ENCODE measurements at regions of chr15 and their contacts with region 1.

Region 1: DNA sequence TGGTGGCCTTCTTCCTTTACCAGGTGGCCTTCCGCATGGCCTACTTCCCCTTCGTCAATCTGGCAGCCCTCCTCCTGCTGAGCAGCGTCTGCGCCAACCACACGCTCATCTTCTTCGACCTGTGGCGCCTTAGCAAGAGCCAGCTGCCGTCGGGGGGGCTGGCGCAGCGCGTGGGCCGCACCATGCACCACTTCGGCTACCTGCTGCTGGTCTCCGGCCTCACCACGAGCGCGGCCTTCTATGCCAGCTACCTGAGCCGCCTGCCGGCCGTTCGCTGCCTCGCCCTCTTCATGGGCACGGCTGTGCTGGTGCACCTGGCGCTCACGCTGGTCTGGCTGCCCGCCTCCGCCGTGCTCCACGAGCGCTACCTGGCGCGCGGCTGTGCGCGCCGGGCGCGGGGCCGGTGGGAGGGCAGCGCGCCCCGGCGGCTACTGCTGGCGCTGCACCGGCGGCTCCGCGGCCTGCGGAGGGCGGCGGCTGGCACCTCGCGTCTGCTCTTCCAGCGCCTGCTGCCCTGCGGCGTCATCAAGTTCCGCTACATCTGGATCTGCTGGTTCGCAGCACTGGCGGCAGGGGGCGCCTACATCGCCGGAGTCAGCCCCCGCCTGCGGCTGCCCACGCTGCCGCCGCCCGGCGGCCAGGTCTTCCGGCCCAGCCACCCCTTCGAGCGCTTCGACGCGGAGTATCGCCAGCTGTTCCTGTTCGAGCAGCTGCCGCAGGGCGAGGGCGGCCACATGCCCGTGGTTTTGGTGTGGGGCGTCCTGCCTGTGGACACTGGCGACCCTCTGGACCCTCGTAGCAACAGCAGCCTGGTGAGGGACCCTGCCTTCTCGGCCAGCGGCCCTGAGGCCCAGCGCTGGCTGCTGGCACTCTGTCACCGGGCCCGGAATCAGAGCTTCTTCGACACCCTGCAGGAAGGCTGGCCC is 9.9 kb downstream of the DISP2 start:
- DNase-seq: peak; percentile 93 to 97
- H3K4me3 ChIP-seq: peak overlapping the region; percentile 39 to 48 (median 44)
- H3K27ac ChIP-seq: peak overlapping the region; percentile 70 to 81 (median 76)
- H3K4me1 ChIP-seq: peaks cover 17 to 25% (median 23%) of the 10 kb centered on the region in 4 donors
- H3K27me3 ChIP-seq: no peaks in the 10 kb centered on the region
- CTCF ChIP-seq: peak in 5 of 7 experiments; percentile 45 to 90 (median 74)
- EP300 ChIP-seq: no peak
- POLR2A ChIP-seq: no peak

Region 2: DNA sequence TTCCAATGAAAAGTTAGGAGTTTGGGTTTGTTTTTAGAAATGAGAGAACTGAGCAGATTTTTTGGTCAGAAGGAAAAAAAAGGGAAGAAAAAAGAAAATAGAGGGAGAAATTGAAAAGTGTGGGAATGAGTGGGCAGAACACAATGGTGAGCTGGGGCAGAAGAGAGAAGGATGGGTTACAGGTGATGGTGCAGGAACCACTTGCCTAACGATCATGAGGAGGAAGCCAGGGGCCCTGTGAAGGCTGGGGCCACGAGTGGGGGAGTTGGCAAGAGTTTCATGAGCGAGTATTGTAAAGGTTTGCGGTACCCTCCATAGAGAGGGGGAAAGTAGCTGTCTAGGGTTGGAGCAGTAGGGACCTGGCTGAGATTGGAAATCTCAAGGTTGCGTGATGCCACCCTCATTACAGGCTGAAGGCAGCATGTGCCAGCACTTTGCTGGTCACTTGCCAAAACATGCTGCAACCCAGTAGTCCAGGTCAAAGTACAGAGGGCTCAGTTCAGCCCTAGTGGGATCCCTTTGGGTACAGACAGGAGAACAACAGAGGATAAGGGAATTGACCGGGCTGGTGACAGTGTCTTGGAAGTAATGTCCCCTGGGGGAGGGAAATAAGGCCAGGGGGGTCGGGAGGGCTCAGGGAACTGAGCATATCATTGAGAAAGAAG is 44.3 kb after region 1 on chr15:
- intact Hi-C with region 1: loop called (anchors 10 kb)
- DNase-seq: peak in 1 of 2 donors; percentile 76
- H3K4me3 ChIP-seq: no peak overlapping the region
- H3K27ac ChIP-seq: no peak overlapping the region
- H3K4me1 ChIP-seq: peaks cover under 1 to 22% (median 17%) of the 10 kb centered on the region in 4 donors
- H3K27me3 ChIP-seq: no peaks in the 10 kb centered on the region
- CTCF ChIP-seq: no peak
- EP300 ChIP-seq: no peak
- POLR2A ChIP-seq: no peak

Region 3: DNA sequence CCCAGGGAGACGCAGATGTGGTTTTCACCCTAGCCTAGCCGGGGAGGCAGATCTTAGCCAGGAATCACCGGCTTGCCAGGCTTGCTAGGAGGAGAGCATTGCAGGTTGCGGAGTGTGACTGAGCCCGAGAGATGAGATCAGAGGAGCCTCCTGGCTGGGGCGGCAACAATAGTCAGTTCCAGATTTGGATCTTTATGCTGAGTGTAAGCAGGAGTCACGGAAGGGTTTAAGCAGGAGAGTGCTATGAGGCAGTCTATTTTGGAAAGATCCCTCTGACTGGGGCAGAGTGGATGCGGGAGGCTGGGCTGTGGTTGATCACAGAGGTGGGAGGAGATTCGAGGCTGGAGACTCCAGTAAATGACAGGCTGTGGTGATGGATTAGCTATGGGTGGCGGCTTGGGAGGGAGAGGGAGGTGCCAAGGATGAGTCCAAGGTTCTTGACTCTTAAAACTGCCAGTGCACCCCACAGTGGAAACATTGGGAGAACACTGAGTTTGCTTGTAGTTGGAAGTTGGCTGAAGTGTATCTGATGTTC is 62.4 kb after region 1 on chr15:
- intact Hi-C with region 1: no loop called
- DNase-seq: peak in 1 of 2 donors; percentile 52
- H3K4me3 ChIP-seq: no peak overlapping the region
- H3K27ac ChIP-seq: no peak overlapping the region
- H3K4me1 ChIP-seq: peaks cover 0 to 1% (median under 1%) of the 10 kb centered on the region in 4 donors
- H3K27me3 ChIP-seq: peaks cover 0 to 5% (median 0%) of the 10 kb centered on the region in 3 donors
- CTCF ChIP-seq: no peak
- EP300 ChIP-seq: no peak
- POLR2A ChIP-seq: no peak